Sciatic nerve (tissue), 2 donors: ENCODE measurements at regions of chr1 and their contacts with region 1.

Region 1: GRCh38 chr1:154993572-154994268 is at the start of gene LENEP:
- DNase-seq: no peak
- ATAC-seq: no peak
- total RNA-seq, gene LENEP: not detected

Region 2: GRCh38 chr1:154913273-154913672 is 80.4 kb before region 1 on chr1:
- intact Hi-C with region 1: no loop called
- DNase-seq: no peak
- ATAC-seq: no peak

Region 3: DNA sequence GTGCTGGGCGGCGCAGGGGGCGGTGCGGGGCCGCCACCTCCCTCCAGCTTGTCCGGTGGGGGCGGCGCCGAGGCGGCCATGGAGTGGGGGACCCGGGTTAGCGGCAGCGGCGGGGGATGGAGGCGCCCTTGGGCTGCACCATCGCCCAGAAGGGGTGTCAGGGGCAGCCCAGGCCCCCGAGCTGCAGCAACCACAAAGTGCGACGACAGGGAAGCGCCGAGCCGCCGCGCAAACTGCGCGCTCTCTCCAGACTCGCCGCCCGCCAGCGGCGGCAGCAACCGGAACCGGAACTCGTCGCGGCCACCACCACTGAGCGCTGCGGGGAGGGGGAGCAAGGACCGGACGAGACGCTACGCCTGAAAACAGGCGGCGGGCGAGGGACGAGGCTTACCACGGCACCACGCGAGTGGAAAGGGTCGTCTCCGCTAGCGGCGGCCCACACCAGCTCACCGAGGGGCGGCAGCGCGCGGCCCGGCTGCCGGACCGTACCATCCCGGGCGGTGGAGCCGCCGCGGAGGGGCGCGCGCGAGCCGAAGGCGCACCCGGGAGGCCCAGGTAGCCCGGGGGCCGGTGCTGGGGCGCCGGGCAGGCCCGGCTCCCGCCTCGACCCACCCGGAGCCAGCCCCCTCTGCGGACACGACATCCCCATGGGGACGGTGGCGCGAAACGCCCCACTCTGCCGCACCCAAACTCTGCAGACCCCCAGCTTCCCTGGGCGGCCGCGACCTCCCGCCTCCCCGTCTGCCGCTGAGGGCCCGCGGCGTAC is 32.0 kb before region 1 on chr1 and contains the start of gene PYGO2:
- intact Hi-C with region 1: loop called (anchors 2 kb)
- DNase-seq: peak; percentile 90
- ATAC-seq: peak; percentile 84
- total RNA-seq, gene PYGO2: 25.0 TPM

Region 4: DNA sequence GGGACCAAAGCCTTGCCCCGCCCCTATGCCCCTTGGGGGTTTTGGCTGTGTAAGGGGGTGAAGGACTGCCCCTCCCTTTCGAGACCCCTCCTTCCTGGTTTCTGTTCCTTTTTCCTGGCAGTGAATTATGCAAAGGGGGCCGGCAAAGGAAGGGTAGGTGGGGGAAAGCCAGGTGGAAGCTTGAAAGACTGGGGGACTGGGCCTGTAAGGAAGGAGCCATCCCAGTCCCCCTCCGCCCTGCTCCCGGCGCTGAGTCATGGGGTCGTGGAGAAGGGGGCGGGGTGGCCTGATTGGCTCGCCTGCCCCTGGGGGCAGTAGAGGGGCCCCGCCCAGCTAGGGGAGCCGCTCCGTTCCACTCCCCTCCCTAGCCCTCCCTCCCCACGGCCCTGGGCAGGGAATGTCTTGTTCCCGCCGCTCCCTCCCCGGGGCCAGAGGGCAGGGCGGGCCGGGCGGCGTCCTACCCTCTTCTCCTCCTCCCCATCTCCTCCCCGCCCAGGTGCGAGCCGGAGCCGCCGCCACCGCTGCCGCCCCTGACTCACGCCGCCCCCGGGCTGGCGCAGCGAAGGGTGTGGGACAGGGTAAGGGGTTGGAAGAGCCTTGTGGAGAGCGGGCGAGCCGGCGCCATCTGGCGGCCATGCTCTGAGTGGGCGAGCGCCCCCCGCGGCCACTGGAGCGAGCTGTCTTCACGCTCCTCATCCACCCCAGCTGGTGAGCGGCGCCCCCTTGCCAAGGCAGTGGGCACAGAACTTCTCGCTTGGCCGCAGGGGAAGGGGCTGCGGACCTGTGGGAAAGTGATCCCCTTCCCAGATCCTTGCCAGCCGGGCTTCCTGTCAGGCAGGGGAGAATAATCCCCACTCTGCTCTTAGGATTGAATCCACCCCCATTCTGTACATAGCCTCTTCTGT is 23.6 kb after region 1 on chr1:
- intact Hi-C with region 1: no loop called
- DNase-seq: peak; percentile 92
- ATAC-seq: peak; percentile 95